KBM-7 (cell line): ENCODE measurements at regions of chr3 and their contacts with region 1.

Region 1: DNA sequence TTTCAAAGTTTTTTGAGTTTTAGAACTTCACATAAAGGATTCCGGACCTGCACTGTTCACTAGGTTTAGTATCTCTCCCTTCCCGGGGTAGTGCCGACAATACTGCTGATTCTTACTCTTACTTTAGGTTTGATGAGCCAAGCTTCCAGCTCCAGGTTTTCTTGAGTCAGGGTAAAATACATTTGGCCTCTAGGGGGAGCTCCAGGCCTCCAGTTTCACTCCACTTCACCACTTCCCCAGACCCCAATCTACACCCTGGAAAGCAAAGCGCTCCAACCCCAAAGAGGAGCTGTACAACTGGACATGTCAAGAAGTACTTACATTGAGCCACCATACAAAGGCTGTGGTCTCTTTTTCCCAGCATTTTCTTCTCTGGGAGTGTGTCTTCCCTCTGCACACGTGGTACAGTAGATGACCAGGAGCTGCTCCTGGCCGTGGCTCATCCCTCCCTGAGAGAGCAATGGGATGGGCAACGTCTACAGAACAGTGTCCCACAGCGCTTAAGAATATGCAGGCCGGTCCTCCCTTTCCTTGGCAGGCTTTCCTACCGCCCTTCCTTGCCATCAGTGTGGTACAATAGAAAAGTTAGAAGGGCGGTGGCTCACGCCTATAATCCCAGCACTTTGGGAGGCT is 93.9 kb upstream of the CCDC80 start:
- DNase-seq: peak; percentile 91

Region 2: DNA sequence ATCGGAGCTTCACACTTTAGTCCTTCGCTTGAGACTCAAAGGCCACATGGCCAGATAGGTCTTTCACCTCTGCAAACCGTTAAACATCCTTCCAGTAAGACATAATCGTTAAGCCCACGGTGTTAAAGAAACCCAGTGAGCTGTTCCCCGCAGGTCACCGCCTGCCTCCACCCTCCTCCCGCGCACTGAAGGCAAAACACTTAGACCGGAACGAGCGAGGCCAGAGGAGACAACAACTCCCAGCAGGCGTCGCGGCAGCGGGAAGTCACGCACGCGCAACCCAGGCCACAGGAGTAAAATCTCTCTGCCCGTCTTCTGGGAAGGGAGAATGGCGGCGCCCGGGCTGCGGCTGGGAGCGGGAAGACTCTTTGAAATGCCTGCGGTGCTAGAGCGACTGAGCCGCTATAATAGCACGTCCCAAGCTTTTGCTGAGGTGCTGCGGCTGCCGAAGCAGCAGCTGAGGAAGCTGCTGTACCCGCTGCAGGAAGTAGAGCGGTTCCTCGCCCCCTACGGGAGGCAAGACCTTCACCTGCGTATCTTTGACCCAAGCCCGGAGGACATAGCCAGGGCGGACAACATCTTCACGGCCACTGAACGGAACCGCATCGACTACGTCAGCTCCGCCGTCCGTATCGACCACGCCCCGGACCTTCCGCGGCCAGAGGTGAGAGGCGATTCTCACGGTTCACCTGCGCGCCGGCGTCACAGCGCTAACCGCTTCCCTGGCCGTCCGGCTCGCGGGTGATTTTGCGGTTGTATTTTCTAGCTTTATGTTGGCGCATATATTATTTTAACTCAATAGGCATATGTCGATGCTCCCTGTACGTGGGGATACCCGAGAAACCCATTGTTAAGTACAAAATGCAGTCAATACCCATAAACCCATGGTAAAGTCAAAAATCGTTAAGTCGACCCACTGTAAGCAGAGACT is 256.1 kb after region 1 on chr3 and contains the start of gene GTPBP8:
- in situ Hi-C with region 1: loop called (anchors 25 kb)
- DNase-seq: peak; percentile 91